ENCODE measurements at regions of chr17 and their contacts with region 1.

Region 1: DNA sequence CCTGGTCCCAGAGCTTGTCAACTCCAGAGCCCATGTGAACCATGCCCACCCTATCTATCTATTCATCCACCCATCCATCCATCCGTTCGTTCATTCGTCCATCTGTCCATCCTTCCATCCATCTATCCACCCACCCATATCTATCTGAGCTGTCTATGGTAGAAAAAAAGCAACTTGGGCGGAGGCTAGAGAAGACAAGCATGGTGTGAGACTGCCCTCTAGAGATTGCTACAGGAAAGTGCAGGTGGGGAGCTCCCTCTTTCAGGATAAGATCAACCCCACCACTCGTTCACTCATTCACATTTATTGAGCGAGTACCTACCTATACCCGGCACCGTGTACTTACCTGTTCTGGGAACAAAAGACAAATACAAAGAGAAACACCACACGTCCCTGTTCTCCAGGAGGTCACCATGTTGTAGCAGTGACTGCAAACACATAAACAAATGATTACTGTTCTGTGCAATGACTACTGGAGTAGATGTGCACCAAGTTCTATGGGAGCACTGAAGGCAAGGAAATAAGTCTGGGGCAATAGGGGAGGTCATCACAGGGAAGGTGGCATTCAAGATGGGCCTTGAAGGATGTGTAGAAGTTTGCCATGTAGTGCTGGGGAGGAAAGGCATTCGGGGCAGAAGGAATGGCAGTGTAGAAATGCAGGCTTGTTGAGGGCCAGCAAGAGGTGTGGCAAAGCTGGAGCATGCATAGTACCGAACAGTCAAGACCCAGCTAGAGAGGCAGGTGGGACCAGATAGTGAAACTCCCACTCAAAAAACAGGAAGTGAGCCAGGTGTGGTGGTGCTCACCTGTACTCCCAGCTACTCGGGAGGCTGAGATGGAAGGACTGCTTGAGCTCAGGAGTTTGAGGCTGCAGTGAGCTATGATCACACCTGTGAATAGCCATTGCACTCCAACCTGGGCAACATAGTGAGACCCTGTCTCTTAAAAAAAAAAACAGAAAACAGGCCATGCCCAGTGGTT is 13.4 kb upstream of the ATP5MC1 start:
- DNase-seq: peak; percentile 68
- ATAC-seq: peak; percentile 83
- H3K4me3 Mint-ChIP-seq: no peak overlapping the region
- H3K27ac Mint-ChIP-seq: no peak overlapping the region
- H3K4me1 Mint-ChIP-seq: no peaks in the 10 kb centered on the region
- H3K27me3 Mint-ChIP-seq: no peaks in the 10 kb centered on the region
- CTCF ChIP-seq: peak; percentile 95

Region 2: DNA sequence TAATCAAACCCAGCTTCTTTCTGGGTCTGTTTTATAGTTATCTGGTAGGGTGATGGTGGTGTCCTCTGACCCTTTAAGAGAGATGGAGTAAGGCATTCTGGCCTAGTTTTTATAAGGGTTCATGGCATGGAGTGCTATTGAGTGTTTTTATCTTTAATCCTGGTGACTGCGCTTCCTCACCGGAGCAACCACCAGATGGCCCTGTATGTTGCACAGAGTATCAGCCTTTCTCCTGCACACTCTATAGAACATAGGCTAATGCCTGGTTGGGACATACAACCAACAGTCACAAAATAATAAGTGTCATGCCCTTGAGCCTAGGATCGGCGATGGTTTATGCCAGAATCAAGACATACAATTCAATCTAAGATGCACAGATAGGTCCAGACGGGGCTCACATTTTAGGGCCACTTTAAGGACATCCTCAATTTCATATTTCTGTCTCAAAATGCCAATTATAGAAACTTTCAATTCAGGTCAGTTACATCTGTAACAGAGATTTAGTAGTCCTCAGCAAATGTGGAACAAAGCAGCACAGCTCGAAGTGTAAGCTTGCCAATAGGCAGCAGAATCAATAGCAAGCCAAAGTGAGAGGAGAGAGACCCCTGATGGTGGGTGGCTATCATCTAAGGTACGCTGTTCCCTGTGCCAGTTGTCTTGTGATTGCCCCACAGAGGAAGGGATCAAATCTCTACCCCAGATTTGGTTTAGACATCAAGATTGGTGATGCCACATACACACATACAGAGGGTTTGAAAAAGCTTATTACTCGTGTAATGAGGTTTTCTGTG is 215.9 kb before region 1 on chr17:
- CTCF ChIA-PET with region 1: interaction called, 17 read pairs
- POLR2A ChIA-PET with region 1: no interaction called
- DNase-seq: no peak
- ATAC-seq: peak; percentile 72
- H3K4me3 Mint-ChIP-seq: no peak overlapping the region
- H3K27ac Mint-ChIP-seq: no peak overlapping the region
- H3K4me1 Mint-ChIP-seq: no peaks in the 10 kb centered on the region
- H3K27me3 Mint-ChIP-seq: peaks cover 35% of the 10 kb centered on the region
- CTCF ChIP-seq: no peak

Region 3: DNA sequence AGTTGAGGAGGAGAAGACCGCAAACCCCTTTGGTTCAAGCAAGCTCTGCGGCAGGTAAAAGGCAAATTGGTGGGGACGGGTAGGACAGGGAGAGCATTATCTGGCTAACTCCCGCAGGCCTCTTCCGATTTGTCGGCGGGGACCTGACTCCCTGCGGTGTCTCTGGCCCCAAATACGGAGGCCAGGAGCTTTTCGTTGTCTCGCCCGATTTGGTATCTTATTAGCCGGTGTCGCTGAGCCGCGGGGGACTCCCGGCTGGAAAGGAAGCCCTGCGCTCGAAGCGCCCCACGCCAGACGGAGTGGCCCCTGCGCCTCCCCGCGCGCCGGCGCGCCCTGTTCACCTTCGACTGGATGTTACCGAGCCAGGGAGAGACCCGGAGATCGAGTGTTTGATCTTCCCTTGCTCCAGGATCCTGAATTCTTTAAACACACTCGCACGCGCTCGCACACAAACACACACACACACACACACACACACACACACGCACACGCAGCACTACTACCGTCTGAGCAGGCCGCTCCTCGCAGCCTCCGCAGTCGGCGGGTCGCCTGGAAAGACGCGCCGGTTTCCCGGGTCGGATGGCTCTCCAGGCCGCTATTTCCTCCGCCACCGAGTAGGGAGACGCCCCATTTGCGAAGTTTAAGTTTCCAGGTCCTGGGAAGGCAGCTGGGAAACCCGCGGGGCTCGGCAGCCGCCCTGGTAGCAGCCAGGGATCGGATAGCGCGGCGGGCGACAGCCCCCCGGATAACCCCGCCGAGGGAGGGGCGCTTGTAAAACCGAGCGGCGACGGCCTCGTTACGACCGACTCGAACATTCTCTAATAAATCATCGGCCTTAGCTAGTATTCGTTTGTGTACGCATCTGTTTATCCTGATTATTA is 160.2 kb before region 1 on chr17:
- CTCF ChIA-PET with region 1: interaction called, 68 read pairs
- POLR2A ChIA-PET with region 1: interaction called, 5 read pairs
- DNase-seq: peak; percentile 43
- ATAC-seq: peak; percentile 3; the same call in 1 of the 2 replicates
- H3K4me3 Mint-ChIP-seq: peak overlapping the region; percentile 85
- H3K27ac Mint-ChIP-seq: peak overlapping the region; percentile 91
- H3K4me1 Mint-ChIP-seq: peaks cover 52% of the 10 kb centered on the region
- H3K27me3 Mint-ChIP-seq: peaks cover 100% of the 10 kb centered on the region
- CTCF ChIP-seq: no peak

Region 4: DNA sequence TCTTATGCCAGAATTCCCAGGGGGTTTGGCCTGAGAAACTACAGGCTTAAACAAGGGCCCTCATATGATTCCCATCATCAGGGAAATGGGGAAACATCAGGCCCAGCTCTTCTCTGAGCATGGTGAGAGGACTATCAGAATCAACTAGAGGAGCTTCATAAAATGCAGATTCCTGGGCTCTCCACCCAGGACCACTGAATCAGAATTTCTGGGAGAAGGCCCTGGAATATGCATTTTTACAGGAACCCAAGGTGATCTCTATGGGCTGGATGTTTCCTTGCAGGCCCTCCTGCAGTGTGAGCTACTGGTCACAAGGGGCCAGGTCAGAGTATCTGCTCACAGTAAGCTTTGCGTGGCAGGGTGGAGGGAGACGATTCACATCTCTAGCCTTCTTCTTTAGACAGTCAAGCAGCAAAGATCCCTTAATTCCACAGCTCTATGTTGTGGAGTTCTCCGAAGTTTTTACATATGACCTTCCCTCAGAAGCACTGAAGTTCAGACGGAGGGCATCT is 111.9 kb before region 1 on chr17:
- CTCF ChIA-PET with region 1: interaction called, 18 read pairs
- POLR2A ChIA-PET with region 1: no interaction called
- DNase-seq: no peak
- ATAC-seq: peak; percentile 72
- H3K4me3 Mint-ChIP-seq: no peak overlapping the region
- H3K27ac Mint-ChIP-seq: no peak overlapping the region
- H3K4me1 Mint-ChIP-seq: no peaks in the 10 kb centered on the region
- H3K27me3 Mint-ChIP-seq: peaks cover 57% of the 10 kb centered on the region
- CTCF ChIP-seq: no peak

Region 5: GRCh38 chr17:48804925-48805411 is 74.2 kb before region 1 on chr17:
- CTCF ChIA-PET with region 1: interaction called, 355 read pairs
- POLR2A ChIA-PET with region 1: interaction called, 3 read pairs
- DNase-seq: peak; percentile 94
- ATAC-seq: peak; percentile 99
- H3K4me3 Mint-ChIP-seq: peak overlapping the region; percentile 24; the same call in 1 of the 2 replicates
- H3K27ac Mint-ChIP-seq: no peak overlapping the region
- H3K4me1 Mint-ChIP-seq: peaks cover 5% of the 10 kb centered on the region
- H3K27me3 Mint-ChIP-seq: no peaks in the 10 kb centered on the region
- CTCF ChIP-seq: peak; percentile 95

Region 6: GRCh38 chr17:48843172-48843900 is 35.9 kb before region 1 on chr17:
- CTCF ChIA-PET with region 1: interaction called, 11 read pairs
- POLR2A ChIA-PET with region 1: no interaction called
- DNase-seq: no peak
- ATAC-seq: no peak
- H3K4me3 Mint-ChIP-seq: no peak overlapping the region
- H3K27ac Mint-ChIP-seq: no peak overlapping the region
- H3K4me1 Mint-ChIP-seq: peaks cover 4% of the 10 kb centered on the region
- H3K27me3 Mint-ChIP-seq: no peaks in the 10 kb centered on the region
- CTCF ChIP-seq: no peak

Region 7: GRCh38 chr17:49108318-49108717 is 229.1 kb after region 1 on chr17:
- CTCF ChIA-PET with region 1: no interaction called
- POLR2A ChIA-PET with region 1: no interaction called
- DNase-seq: no peak
- ATAC-seq: peak; percentile 66
- H3K4me3 Mint-ChIP-seq: peak overlapping the region; percentile 15
- H3K27ac Mint-ChIP-seq: peak overlapping the region; percentile 86
- H3K4me1 Mint-ChIP-seq: peaks cover 33% of the 10 kb centered on the region
- H3K27me3 Mint-ChIP-seq: no peaks in the 10 kb centered on the region
- CTCF ChIP-seq: no peak